ENCODE measurements at regions of chr11 and their contacts with region 1.

Region 1: DNA sequence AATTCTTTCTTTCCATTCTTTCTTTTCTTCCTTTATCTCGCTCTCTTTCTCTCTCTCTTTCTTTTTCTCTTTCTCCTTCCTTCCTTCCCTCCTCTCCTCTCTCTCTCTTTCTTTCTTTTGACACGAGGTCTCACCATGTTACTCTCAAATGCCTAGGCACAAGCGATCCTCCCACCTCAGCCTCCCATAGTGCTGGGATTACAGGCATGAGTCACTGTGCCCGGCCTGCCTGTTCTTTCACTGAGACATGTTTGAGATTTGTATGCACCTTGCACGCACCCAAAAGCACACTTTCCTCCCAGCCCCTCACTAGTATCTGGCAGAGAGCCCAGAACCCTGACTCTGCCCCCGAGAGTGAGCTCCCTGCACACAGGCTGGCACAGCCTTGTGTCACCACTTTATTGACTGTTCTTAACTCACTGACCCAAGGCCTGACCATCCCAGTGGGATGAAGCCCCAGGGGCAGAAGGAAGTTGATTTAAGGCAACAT is 56.8 kb downstream of the CD6 start:
- DNase-seq: peak in 13 of 14 experiments; percentile 43 to 86 (median 69)
- ATAC-seq: peak; percentile 17
- H3K4me3 ChIP-seq: peak overlapping the region; percentile 15
- H3K4me3 Mint-ChIP-seq: peak overlapping the region; percentile 84
- H3K27ac ChIP-seq: peak overlapping the region; percentile 45 to 84
- H3K27ac Mint-ChIP-seq: peak overlapping the region; percentile 99
- H3K4me1 ChIP-seq: peaks cover 63% of the 10 kb centered on the region
- H3K4me1 Mint-ChIP-seq: peaks cover 84% of the 10 kb centered on the region
- H3K27me3 ChIP-seq: no peaks in the 10 kb centered on the region
- H3K27me3 Mint-ChIP-seq: no peaks in the 10 kb centered on the region
- CTCF ChIP-seq: no peak

Region 2: DNA sequence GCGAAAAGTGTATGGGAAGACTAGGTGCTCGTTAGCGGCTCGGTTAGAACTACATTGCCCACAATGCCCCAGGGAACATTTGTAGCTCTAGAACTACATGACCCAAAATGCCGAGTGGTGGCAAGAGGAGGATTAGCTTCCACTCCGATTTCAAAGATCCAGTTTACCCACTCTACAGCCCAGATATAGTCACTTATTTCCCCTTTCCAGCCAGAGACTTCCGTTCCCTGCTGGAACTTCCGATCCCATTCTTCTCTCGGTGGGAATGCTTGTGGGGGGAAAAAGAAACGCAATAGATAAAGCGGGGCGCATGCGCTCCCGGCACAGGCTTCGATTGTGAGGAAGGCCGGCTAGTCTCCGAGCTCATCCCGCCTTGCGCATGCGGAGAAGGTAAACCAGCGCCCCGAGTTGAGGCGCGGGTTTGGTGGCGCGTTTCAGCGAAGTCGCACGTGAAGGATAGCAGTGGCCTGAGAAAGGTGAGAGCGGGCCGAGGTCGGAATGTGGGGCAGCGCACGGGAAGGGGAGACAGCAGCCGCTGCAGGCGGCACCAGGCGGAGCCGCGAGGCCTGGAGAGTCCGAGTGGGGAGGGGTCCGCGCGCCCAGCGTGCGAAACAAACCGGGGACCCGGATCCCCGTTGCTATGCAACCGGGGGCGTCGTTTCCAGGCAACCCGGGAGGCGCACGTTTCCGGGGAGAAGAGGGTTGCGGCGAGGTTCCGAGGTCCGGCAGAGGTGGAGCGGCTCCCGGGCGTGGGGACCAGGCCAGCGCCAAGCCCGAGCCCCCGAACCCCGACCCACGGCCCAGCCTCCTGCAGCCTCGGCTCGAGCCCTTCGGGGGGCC is 114.3 kb before region 1 on chr11 and contains the start of gene TMEM109:
- CTCF ChIA-PET with region 1: interaction called, 3 read pairs
- POLR2A ChIA-PET with region 1: interaction called, 16 read pairs
- intact Hi-C with region 1: no loop called
- DNase-seq: peak; percentile 80 to 95 (median 85)
- ATAC-seq: peak; percentile 67
- H3K4me3 ChIP-seq: peak within 1 kb of the TSS; percentile 95
- H3K4me3 Mint-ChIP-seq: peak within 1 kb of the TSS; percentile 98
- H3K27ac ChIP-seq: peak within 1 kb of the TSS; percentile 97 to 98
- H3K27ac Mint-ChIP-seq: peak within 1 kb of the TSS; percentile 92
- H3K4me1 ChIP-seq: peaks cover 68% of the 10 kb centered on the region
- H3K4me1 Mint-ChIP-seq: peaks cover 65% of the 10 kb centered on the region
- H3K27me3 ChIP-seq: no peaks in the 10 kb centered on the region
- H3K27me3 Mint-ChIP-seq: no peaks in the 10 kb centered on the region
- CTCF ChIP-seq: no peak
- total RNA-seq, gene TMEM109: 27.8 to 32.9 TPM

Region 3: GRCh38 chr11:60992842-60993409 is 35.4 kb before region 1 on chr11:
- CTCF ChIA-PET with region 1: no interaction called
- POLR2A ChIA-PET with region 1: interaction called, 43 read pairs
- intact Hi-C with region 1: loop called in 1 of 2 experiments (anchors 5 kb)
- DNase-seq: peak in 1 of 14 experiments; percentile 15
- ATAC-seq: no peak
- H3K4me3 ChIP-seq: no peak overlapping the region
- H3K4me3 Mint-ChIP-seq: peak overlapping the region; percentile 78
- H3K27ac ChIP-seq: peak overlapping the region; percentile 22 to 61
- H3K27ac Mint-ChIP-seq: peak overlapping the region; percentile 87
- H3K4me1 ChIP-seq: peaks cover 89% of the 10 kb centered on the region
- H3K4me1 Mint-ChIP-seq: peaks cover 83% of the 10 kb centered on the region
- H3K27me3 ChIP-seq: no peaks in the 10 kb centered on the region
- H3K27me3 Mint-ChIP-seq: no peaks in the 10 kb centered on the region
- CTCF ChIP-seq: no peak

Region 4: GRCh38 chr11:61049859-61050258 is 21.5 kb after region 1 on chr11:
- CTCF ChIA-PET with region 1: interaction called, 3 read pairs
- POLR2A ChIA-PET with region 1: interaction called, 307 read pairs
- intact Hi-C with region 1: no loop called
- DNase-seq: no peak
- ATAC-seq: no peak
- H3K4me3 ChIP-seq: no peak overlapping the region
- H3K4me3 Mint-ChIP-seq: no peak overlapping the region
- H3K27ac ChIP-seq: no peak overlapping the region
- H3K27ac Mint-ChIP-seq: peak overlapping the region; percentile 81
- H3K4me1 ChIP-seq: peaks cover 44% of the 10 kb centered on the region
- H3K4me1 Mint-ChIP-seq: peaks cover 76% of the 10 kb centered on the region
- H3K27me3 ChIP-seq: no peaks in the 10 kb centered on the region
- H3K27me3 Mint-ChIP-seq: no peaks in the 10 kb centered on the region
- CTCF ChIP-seq: no peak

Region 5: DNA sequence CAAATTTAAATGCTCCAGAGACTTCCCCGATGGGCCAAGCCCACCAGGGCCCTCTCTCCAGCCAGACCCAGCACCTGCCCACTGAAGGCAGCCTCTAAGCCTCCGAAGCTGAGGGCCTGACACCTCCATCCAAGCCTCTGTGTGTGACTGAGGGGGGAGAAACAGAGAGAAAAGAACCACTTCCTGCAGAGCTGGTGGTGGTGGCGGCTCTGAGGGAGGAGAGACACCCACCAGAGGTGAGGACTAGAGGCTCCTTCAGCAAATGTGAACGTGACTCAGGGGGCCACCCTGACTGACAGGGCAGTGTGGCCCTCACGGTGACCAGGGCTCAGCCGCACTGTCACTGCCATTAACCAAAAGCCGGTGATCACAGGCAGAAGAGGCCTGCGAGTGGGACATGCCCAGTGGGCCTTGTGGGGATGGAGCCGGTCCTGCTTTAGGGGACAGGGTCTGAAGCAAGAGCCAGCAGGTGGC is 42.9 kb after region 1 on chr11:
- CTCF ChIA-PET with region 1: interaction called, 7 read pairs
- POLR2A ChIA-PET with region 1: interaction called, 23 read pairs
- intact Hi-C with region 1: no loop called
- DNase-seq: peak; percentile 37 to 88 (median 63)
- ATAC-seq: peak; percentile 95
- H3K4me3 ChIP-seq: no peak overlapping the region
- H3K4me3 Mint-ChIP-seq: peak overlapping the region; percentile 82
- H3K27ac ChIP-seq: peak overlapping the region; percentile 26 to 58
- H3K27ac Mint-ChIP-seq: peak overlapping the region; percentile 92
- H3K4me1 ChIP-seq: peaks cover 80% of the 10 kb centered on the region
- H3K4me1 Mint-ChIP-seq: peaks cover 95% of the 10 kb centered on the region
- H3K27me3 ChIP-seq: no peaks in the 10 kb centered on the region
- H3K27me3 Mint-ChIP-seq: no peaks in the 10 kb centered on the region
- CTCF ChIP-seq: no peak

Region 6: GRCh38 chr11:61102667-61103571 is 74.6 kb after region 1 on chr11:
- CTCF ChIA-PET with region 1: no interaction called
- POLR2A ChIA-PET with region 1: interaction called, 21 read pairs
- intact Hi-C with region 1: loop called in 1 of 2 experiments (anchors 1 kb)
- DNase-seq: peak in 4 of 14 experiments; percentile 47 to 78 (median 55)
- ATAC-seq: peak; percentile 22
- H3K4me3 ChIP-seq: peak overlapping the region; percentile 100
- H3K4me3 Mint-ChIP-seq: no peak overlapping the region
- H3K27ac ChIP-seq: peak overlapping the region; percentile 95 to 96
- H3K27ac Mint-ChIP-seq: no peak overlapping the region
- H3K4me1 ChIP-seq: peaks cover 58% of the 10 kb centered on the region
- H3K4me1 Mint-ChIP-seq: peaks cover 45% of the 10 kb centered on the region
- H3K27me3 ChIP-seq: no peaks in the 10 kb centered on the region
- H3K27me3 Mint-ChIP-seq: no peaks in the 10 kb centered on the region
- CTCF ChIP-seq: no peak

Measured in CD4-positive, alpha-beta T cell (primary cell).